ENCODE measurements at regions of chr12 and their contacts with region 1.

Region 1: GRCh38 chr12:79710707-79711483 is 20.1 kb upstream of the PAWR start:
- H3K4me3 ChIP-seq: no peak overlapping the region
- H3K27ac ChIP-seq: no peak overlapping the region
- H3K4me1 ChIP-seq: no peaks in the 10 kb centered on the region
- CTCF ChIP-seq: no peak

Region 2: DNA sequence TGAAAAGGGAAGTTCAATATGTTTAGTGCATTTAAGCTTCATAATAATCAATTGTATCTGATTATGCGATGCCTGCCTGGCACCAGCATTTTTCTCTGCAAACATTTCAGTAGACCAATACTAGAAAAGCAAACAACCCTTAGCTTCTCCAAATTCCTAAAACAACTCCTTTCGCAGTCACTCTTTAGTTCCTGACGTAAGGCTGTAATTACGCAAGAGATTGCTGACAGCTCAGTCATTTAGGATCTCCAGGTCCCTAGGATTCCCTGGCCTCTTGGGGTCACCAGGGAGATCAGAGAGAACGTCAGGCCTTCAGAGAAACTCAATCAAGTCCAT is 410.8 kb before region 1 on chr12:
- CTCF ChIA-PET with region 1: no interaction called
- POLR2A ChIA-PET with region 1: no interaction called
- H3K4me3 ChIP-seq: no peak overlapping the region
- H3K27ac ChIP-seq: no peak overlapping the region
- H3K4me1 ChIP-seq: no peaks in the 10 kb centered on the region
- CTCF ChIP-seq: no peak

Region 3: DNA sequence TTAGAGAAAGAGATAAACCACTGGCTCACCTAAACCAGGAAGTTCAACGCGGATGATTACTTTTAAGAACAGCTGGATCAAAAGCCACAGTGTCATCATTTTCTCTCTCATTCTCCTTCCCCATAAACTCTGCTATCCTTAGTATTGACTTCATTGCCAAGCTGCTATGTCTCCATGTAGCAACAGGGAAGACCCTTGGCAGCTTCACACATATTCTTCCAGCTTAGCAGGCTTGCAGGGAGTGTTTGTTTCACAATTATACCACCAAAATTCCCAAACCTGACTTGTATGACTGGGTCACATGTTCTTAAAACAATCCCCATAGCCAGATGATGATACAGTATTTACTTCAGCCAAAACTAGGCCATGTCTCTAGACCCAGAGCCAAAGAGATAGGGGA is 255.6 kb before region 1 on chr12:
- CTCF ChIA-PET with region 1: no interaction called
- POLR2A ChIA-PET with region 1: interaction called, 10 read pairs
- H3K4me3 ChIP-seq: no peak overlapping the region
- H3K27ac ChIP-seq: no peak overlapping the region
- H3K4me1 ChIP-seq: no peaks in the 10 kb centered on the region
- CTCF ChIP-seq: no peak

Region 4: DNA sequence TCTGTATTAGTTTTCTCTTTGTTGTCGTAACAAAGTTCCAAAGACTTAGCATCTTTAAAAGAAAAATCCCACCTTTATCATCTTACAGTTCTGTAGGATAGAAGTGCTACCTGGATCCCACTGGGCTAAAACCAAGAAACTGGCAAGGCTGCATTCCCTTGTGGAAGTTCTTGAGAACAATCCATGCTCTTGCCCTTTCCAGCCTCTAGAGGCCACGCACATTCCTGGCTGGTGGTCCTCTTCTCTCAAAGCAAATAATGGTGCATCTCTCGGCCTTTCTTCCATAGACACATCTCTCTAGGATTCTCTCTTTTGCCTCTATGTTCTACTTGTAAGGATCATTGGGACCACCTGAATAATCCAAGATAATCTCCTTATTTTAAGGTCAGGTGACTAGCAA is 11.9 kb before region 1 on chr12:
- CTCF ChIA-PET with region 1: no interaction called
- POLR2A ChIA-PET with region 1: no interaction called
- H3K4me3 ChIP-seq: no peak overlapping the region
- H3K27ac ChIP-seq: no peak overlapping the region
- H3K4me1 ChIP-seq: no peaks in the 10 kb centered on the region
- CTCF ChIP-seq: no peak

Region 5: DNA sequence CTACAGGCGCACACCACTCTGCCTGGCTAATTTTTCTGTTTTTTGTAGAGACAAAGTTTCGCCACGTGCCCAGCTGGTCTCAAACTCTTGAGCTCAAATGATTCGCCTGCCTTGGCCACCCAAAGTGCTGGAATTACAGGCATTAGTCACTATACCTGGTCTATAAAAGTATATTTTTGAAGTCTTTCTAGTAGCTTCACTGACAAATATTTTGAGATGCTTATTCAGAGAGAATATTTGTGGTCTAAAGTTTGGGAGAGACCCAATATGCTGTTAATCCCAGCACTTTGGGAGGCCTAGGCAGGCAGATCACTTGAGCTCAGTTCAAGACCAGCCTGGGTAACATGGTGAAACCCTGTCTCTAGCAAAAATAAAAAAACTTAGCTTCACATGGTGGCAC is 246.0 kb after region 1 on chr12:
- CTCF ChIA-PET with region 1: no interaction called
- POLR2A ChIA-PET with region 1: no interaction called
- H3K4me3 ChIP-seq: no peak overlapping the region
- H3K27ac ChIP-seq: no peak overlapping the region
- H3K4me1 ChIP-seq: no peaks in the 10 kb centered on the region
- CTCF ChIP-seq: no peak